ENCODE measurements at regions of chr19 and their contacts with region 1.

Region 1: DNA sequence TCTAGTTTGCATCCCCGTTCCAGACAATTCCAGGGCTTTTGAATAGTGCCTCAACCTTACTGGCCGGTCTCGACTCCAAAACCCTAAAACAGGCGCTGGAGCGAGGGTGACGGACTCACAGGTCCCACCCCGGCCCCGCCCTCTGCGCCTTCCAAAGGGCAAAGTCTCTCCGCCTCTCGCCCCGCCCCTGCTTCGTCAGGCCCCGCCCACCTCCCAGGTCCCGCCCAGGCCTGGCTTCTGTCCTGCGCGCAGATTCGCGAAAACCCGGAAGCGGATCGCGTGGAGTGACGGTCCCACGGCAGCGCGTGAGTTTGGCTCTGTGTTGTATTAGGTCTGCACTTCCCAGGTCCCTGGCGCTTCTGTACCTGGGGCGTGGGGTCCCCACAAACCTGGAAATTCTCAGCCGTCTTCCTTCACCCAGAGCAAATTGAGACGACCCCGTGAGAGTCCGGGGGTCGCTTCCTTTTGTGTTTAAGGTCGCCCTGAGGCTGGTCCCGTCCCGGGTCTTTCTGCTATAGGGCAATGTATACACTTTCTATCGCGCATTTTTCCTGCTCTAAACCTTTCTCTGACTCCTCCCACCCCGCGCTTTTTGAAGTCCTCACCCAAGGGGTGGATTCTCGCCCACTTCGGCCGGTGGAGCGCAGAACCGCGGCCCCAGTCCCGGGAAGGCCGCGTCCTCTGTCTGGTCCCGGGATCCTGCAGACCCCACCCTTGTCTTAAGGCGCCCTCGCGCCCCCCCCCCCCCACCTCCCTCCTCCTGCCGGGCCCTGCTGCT is at the start of gene ZNF813:
- DNase-seq: peak; percentile 99
- ATAC-seq: peak; percentile 79
- H3K4me3 Mint-ChIP-seq: peak within 1 kb of the TSS; percentile 93
- H3K27ac Mint-ChIP-seq: peak within 1 kb of the TSS; percentile 90
- H3K4me1 Mint-ChIP-seq: peaks cover 48% of the 10 kb centered on the region
- H3K27me3 Mint-ChIP-seq: peaks cover 8% of the 10 kb centered on the region
- CTCF ChIP-seq: no peak
- total RNA-seq, gene ZNF813: 15.2 to 17.6 TPM (median 17.5 TPM) in 3 replicates

Region 2: GRCh38 chr19:53455828-53456227 is 11.8 kb before region 1 on chr19:
- CTCF ChIA-PET with region 1: no interaction called
- POLR2A ChIA-PET with region 1: no interaction called
- DNase-seq: no peak
- ATAC-seq: no peak
- H3K4me3 Mint-ChIP-seq: no peak overlapping the region
- H3K27ac Mint-ChIP-seq: no peak overlapping the region
- H3K4me1 Mint-ChIP-seq: peaks cover 12% of the 10 kb centered on the region
- H3K27me3 Mint-ChIP-seq: no peaks in the 10 kb centered on the region; the same call in 1 of the 2 replicates
- CTCF ChIP-seq: no peak

Region 3: GRCh38 chr19:53485046-53486004 is 17.7 kb after region 1 on chr19:
- CTCF ChIA-PET with region 1: no interaction called
- POLR2A ChIA-PET with region 1: no interaction called
- DNase-seq: no peak
- ATAC-seq: peak; percentile 18; the same call in 1 of the 2 replicates
- H3K4me3 Mint-ChIP-seq: no peak overlapping the region
- H3K27ac Mint-ChIP-seq: no peak overlapping the region
- H3K4me1 Mint-ChIP-seq: peaks cover 24% of the 10 kb centered on the region
- H3K27me3 Mint-ChIP-seq: peaks cover 3% of the 10 kb centered on the region; the same call in 1 of the 2 replicates
- CTCF ChIP-seq: no peak

Region 4: DNA sequence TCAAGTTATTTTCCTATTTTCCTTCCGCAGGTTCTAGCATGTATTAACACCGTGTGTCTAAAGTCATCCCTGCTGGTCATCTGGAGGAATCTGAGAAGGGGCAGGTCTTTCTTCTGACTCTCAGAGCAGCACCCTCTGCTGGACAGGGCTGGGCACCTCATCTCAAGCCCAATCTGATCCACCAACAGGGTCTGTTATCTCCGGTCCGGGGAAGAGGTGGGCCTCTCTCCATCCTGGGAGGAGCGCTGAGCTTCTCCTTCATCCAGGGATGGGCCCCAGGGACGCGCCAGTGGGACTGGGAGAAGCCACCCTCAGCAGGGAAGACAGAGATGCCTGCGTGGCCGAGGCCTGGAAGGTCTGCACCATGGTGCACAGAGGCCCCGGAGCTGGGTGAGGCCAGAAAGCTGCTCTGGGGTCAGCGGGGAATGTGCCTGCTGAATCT is 44.3 kb after region 1 on chr19:
- CTCF ChIA-PET with region 1: interaction called, 10 read pairs
- POLR2A ChIA-PET with region 1: no interaction called
- DNase-seq: peak; percentile 91
- ATAC-seq: peak; percentile 99
- H3K4me3 Mint-ChIP-seq: no peak overlapping the region
- H3K27ac Mint-ChIP-seq: no peak overlapping the region
- H3K4me1 Mint-ChIP-seq: peaks cover 7% of the 10 kb centered on the region
- H3K27me3 Mint-ChIP-seq: no peaks in the 10 kb centered on the region
- CTCF ChIP-seq: peak; percentile 78

Region 5: DNA sequence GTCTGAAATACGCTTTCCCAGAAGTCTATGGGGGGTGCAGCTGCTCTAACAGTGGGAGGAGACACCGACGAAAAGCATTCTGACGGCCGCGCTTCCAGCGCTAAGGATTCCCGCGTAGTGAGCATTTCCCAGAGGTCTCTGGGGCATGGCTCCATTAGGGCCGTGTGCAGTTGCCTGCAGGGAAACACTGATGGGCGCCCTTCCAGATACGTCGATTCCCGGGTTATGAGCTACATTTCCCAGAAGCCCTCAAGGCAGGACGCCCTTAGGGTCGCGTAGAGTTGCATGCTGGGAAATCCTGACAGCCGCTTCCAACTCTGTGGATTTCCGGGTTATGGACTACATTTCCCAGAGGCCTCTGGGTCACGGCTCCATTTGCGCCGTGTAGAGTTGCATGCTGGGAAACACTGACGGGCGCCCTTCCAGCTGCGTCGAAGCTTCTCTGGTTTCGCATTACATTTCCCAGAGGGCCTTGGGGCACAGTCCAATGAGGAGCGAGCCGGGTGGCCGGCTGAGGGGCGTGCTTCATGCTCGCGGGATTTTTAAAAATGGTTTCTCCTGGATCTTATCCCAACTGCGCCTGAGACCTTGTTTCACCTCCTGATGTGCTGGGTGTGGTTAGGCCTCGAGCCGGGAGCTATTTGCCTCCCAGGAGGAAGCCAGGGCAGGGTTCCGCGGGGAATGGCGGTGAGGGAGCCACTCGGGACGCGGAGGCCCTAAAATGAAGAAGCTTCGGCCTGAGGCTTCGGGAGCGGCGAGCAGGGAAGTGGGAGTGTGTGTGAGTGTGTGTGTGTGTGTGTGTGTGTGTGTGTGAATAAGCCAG is 53.1 kb after region 1 on chr19:
- CTCF ChIA-PET with region 1: interaction called, 10 read pairs
- POLR2A ChIA-PET with region 1: interaction called, 3 read pairs
- DNase-seq: peak; percentile 94
- ATAC-seq: peak; percentile 96
- H3K4me3 Mint-ChIP-seq: peak overlapping the region; percentile 100
- H3K27ac Mint-ChIP-seq: peak overlapping the region; percentile 98
- H3K4me1 Mint-ChIP-seq: peaks cover 14% of the 10 kb centered on the region
- H3K27me3 Mint-ChIP-seq: no peaks in the 10 kb centered on the region
- CTCF ChIP-seq: no peak

Region 6: GRCh38 chr19:53772943-53773342 is 305.3 kb after region 1 on chr19:
- CTCF ChIA-PET with region 1: no interaction called
- POLR2A ChIA-PET with region 1: no interaction called
- DNase-seq: peak; percentile 78
- ATAC-seq: peak; percentile 69
- H3K4me3 Mint-ChIP-seq: peak overlapping the region; percentile 32
- H3K27ac Mint-ChIP-seq: peak overlapping the region; percentile 95
- H3K4me1 Mint-ChIP-seq: peaks cover 54% of the 10 kb centered on the region
- H3K27me3 Mint-ChIP-seq: no peaks in the 10 kb centered on the region
- CTCF ChIP-seq: peak; percentile 62